ENCODE measurements at regions of chr1 and their contacts with region 1.

Region 1: GRCh38 chr1:219659005-219659600 is 46.2 kb upstream of the ZC3H11B start:
- DNase-seq: no peak
- H3K4me3 ChIP-seq: no peak overlapping the region
- H3K27ac ChIP-seq: no peak overlapping the region
- H3K4me1 ChIP-seq: peaks cover 0 to 6% of the 10 kb centered on the region in 2 donors
- H3K27me3 ChIP-seq: no peaks in the 10 kb centered on the region
- CTCF ChIP-seq: no peak
- POLR2A ChIP-seq: no peak

Region 2: DNA sequence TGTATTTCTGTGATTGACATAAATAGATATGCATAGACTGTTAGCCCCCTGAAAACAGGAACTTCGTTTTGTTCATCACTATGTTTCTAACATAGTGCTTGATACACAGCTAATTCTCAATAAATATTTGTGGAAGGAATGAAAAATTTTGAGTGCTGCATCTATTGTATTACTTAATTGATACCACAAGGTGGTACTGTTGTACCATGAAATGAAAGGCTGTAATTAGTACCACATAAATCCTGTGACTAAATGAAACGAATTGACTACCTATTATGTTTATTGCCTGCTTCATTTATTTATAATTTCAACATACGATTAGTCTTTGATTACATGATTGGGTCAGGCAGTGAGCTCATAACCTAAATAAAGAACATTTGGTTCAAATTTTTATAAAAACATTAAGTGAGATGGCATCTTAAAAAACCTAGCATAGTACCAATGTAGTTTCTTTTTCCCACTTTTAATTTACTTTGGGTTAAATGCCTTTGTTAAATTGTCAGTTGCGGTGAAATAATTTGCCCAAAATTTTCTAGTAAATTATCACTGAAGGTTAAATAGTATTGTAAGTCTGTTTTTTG is 1329.0 kb before region 1 on chr1:
- intact Hi-C with region 1: loop called in 1 of 2 experiments (anchors 10 kb)
- DNase-seq: no peak
- H3K4me3 ChIP-seq: no peak overlapping the region
- H3K27ac ChIP-seq: no peak overlapping the region
- H3K4me1 ChIP-seq: no peaks in the 10 kb centered on the region
- H3K27me3 ChIP-seq: no peaks in the 10 kb centered on the region
- CTCF ChIP-seq: peak; percentile 31 to 81 (median 68)
- POLR2A ChIP-seq: no peak